ENCODE measurements at regions of chr16 and their contacts with region 1.

Region 1: GRCh38 chr16:68902008-68902968 is 59.0 kb downstream of the TANGO6 start:
- H3K4me3 ChIP-seq: no peak overlapping the region
- H3K27ac ChIP-seq: no peak overlapping the region
- H3K4me1 ChIP-seq: no peaks in the 10 kb centered on the region
- CTCF ChIP-seq: 0 out of 2 replicates have a peak, but pooled peaks have one; percentile 20

Region 2: GRCh38 chr16:68875871-68876270 is 26.4 kb before region 1 on chr16:
- CTCF ChIA-PET with region 1: no interaction called
- POLR2A ChIA-PET with region 1: no interaction called
- H3K4me3 ChIP-seq: no peak overlapping the region
- H3K27ac ChIP-seq: no peak overlapping the region
- H3K4me1 ChIP-seq: no peaks in the 10 kb centered on the region
- CTCF ChIP-seq: no peak

Region 3: GRCh38 chr16:68927018-68927417 is 24.7 kb after region 1 on chr16:
- CTCF ChIA-PET with region 1: no interaction called
- POLR2A ChIA-PET with region 1: no interaction called
- H3K4me3 ChIP-seq: no peak overlapping the region
- H3K27ac ChIP-seq: no peak overlapping the region
- H3K4me1 ChIP-seq: no peaks in the 10 kb centered on the region
- CTCF ChIP-seq: no peak

Region 4: DNA sequence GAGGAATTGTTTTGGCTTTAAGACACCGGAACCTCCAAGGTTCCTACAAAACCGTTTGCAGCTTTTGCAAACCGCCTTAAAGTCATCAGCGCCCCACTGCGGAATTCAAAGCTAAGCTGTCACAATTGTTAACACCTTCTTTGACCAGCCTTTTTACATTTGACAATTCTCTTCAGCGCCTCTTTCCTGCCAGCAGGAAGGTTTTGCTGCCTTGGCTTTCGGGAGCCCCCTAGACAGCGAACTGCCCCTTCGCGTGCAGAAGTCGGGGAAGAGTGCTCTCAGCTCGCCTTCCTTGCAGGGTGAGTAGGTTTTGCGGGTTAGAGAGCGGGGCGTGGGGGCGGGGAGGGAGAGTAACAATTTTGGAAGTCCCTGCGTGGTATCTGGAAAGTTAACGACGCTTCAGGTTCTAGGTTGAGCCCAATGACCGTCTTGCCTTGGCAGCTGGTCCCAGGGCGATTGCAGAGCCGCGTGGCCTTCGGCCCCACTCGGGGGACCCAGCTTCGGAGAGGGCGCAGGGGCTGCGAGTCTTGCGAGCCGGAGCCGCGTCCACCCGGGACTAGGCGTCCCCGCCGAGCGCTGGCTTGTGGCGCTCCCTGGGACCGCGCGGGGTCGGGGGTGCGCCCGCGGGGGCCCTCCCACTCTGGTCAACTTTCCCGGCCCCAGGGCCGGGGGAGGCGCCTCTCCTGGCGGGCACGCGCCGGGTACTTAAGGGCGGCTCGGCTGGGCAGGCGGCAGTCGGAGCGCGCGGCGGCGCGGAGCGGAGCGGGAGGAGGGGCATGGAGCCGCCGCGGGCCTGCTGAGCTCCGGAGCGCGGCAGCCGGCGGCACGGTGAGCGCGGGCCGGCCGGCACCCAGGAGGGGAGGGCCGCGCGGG is 203.4 kb after region 1 on chr16 and contains the start of gene HAS3:
- CTCF ChIA-PET with region 1: interaction called, 11 read pairs
- POLR2A ChIA-PET with region 1: no interaction called
- H3K4me3 ChIP-seq: peak within 1 kb of the TSS; percentile 49
- H3K27ac ChIP-seq: peak within 1 kb of the TSS; percentile 63; the same call in 1 of the 2 replicates
- H3K4me1 ChIP-seq: no peaks in the 10 kb centered on the region; the same call in 1 of the 2 replicates
- CTCF ChIP-seq: peak; percentile 73

Region 5: GRCh38 chr16:69112285-69113129 is 210.2 kb after region 1 on chr16:
- CTCF ChIA-PET with region 1: interaction called, 11 read pairs
- POLR2A ChIA-PET with region 1: no interaction called
- H3K4me3 ChIP-seq: no peak overlapping the region
- H3K27ac ChIP-seq: no peak overlapping the region
- H3K4me1 ChIP-seq: no peaks in the 10 kb centered on the region
- CTCF ChIP-seq: peak; percentile 69

Measured in HEK293 (cell line).